ENCODE measurements at regions of chr17 and their contacts with region 1.

Region 1: GRCh38 chr17:75319904-75320691 is 30.9 kb upstream of the SLC25A19 start:
- DNase-seq: no peak
- ATAC-seq: no peak

Region 2: DNA sequence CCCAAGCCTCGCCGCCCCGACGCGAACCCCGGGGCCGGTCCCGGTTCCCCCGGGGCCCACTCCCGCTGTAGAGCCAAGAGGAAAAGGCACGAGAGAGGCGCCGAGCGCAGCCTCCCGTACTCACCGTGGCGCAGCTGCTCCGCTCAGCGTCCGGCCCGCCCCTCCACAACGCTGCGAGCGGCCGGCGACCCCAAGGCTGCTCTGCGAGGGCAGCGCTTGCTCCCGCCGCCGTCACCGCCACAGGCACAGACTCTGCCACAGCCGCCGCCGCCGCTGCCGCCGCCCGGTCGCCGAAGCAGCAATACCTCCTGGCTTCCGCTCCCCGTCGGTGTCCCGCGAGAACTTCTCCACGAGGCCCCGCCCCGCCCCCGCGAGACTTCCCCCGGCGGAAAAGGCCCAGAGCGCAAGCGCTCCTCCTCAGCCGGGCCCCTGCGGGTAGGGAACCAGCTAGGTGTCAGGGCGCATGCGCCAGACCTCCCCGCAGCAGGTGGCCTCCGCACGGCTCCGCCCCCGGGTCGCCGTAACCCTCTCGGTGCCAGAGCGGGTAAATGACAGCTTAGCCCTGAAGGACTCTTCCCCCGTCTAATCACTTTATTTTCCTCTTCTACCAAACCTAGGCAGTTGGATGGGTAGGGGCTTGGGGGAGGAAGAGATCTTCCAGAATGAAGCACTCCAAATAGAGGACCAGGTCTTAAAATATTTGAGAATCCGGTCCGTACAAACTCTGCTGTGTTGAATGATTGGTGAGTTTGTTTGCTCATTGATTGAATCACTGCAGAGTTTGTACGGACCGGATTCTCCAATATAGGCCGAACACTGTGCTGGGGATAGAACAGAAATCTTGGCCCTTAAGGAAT is 85.5 kb after region 1 on chr17 and contains the start of gene GRB2:
- intact Hi-C with region 1: loop called (anchors 2 to 5 kb)
- DNase-seq: peak; percentile 99
- ATAC-seq: peak; percentile 96 to 97
- total RNA-seq, gene GRB2: 90.3 to 110 TPM

Measured in left cardiac atrium (tissue), 4 donors.